Activated CD8-positive, alpha-beta T cell treated with anti-CD3 and anti-CD28 coated beads, Interleukin-2, amount 10 ng/mL, durations not matched to agents 7 days and 5 days (primary cell): ENCODE measurements at regions of chr15 and their contacts with region 1.

Region 1: GRCh38 chr15:52208306-52208946 is 17.2 kb upstream of the GNB5 start:
- DNase-seq: peak; percentile 86
- ATAC-seq: peak; percentile 98
- H3K4me3 Mint-ChIP-seq: no peak overlapping the region
- H3K27ac Mint-ChIP-seq: no peak overlapping the region
- H3K4me1 Mint-ChIP-seq: peaks cover 11% of the 10 kb centered on the region
- H3K27me3 Mint-ChIP-seq: no peaks in the 10 kb centered on the region

Region 2: GRCh38 chr15:52097176-52097575 is 111.2 kb before region 1 on chr15:
- CTCF ChIA-PET with region 1: no interaction called
- POLR2A ChIA-PET with region 1: no interaction called
- DNase-seq: no peak
- ATAC-seq: no peak
- H3K4me3 Mint-ChIP-seq: no peak overlapping the region
- H3K27ac Mint-ChIP-seq: no peak overlapping the region
- H3K4me1 Mint-ChIP-seq: no peaks in the 10 kb centered on the region
- H3K27me3 Mint-ChIP-seq: peaks cover 16% of the 10 kb centered on the region

Region 3: DNA sequence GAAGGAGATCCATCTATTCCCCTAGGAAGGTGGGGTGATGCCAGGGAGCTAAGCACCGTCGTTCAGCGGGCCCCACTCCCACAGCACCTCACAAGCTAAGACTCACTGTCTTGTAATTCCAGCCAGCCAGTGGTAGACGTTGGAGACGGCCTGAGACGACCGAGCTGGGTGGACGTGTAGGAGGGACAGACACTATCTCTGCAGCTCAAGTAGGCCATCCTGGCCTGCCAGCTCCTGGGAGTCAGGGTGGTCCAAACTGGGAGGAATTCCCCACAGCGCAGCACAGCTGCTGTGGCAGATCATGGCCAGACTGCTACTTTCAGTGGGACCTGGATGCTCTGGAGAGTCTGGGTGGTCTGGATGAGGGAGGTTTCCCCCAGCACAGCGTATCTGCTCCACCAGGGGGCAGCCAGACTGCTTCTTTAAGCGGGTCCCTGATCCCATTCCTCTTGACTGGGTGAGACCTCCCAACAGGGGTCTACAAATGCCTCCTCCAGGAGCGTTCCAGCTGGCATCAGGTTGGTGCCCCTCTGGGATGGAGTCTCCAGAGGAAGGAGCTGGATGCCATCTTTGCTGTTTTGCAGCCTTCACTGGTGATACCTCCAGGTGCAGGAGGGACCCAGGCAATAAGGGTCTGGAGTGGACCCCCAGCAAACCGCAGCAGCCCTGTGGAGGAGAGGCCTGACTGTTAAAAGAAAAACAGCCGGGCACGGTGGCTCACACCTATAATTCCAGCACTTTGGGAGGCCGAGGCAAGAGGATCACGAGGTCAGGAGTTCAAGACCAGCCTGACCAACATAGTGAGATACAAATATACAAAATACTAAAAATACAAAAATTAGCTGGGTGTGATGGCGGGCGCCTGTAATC is 44.9 kb before region 1 on chr15:
- CTCF ChIA-PET with region 1: interaction called, 28 read pairs
- POLR2A ChIA-PET with region 1: no interaction called
- DNase-seq: peak; percentile 29
- ATAC-seq: no peak
- H3K4me3 Mint-ChIP-seq: no peak overlapping the region
- H3K27ac Mint-ChIP-seq: no peak overlapping the region
- H3K4me1 Mint-ChIP-seq: peaks cover 15% of the 10 kb centered on the region
- H3K27me3 Mint-ChIP-seq: no peaks in the 10 kb centered on the region

Region 4: DNA sequence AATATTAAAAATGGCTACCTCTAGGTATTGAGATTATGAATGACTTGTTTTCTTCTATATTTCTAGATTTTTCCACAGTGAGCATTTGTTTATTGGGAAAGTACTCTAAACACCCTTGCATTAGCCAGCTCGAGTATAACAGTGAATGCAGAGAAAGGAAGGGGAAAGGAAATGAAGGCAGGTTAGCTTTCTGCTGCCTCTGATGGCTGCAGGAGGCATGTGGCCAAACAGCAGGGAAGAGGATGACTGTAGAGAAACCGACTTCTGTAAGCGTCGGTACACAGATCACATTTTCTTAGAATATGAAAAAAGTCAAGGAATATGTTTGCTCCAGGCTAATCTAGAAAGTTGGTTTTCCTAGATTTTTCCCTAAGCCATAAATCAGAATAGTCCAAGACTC is 37.0 kb before region 1 on chr15:
- CTCF ChIA-PET with region 1: interaction called, 42 read pairs
- POLR2A ChIA-PET with region 1: no interaction called
- DNase-seq: peak; percentile 41
- ATAC-seq: peak; percentile 70
- H3K4me3 Mint-ChIP-seq: no peak overlapping the region
- H3K27ac Mint-ChIP-seq: no peak overlapping the region
- H3K4me1 Mint-ChIP-seq: peaks cover 18% of the 10 kb centered on the region
- H3K27me3 Mint-ChIP-seq: no peaks in the 10 kb centered on the region

Region 5: DNA sequence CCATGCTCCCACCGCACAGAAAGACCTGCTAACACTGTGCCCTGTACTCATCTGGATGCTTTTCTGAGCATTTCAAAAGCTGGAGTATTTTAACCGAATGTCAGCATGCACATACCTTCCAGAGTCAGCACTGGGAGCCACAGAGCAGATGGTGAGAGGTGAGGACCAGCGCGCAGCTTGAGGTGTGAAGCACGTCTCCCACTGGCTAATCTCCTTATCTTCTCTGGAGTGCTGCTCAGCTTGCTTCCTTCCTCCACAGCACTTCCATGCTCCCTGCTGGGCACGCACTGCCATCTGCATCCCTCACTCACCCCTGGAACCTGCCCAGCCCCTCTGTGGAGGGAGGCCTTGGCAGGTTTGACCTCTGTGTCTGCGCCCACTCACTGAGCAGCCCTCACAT is 17.2 kb before region 1 on chr15 and contains the start of gene GNB5:
- CTCF ChIA-PET with region 1: interaction called, 55 read pairs
- POLR2A ChIA-PET with region 1: no interaction called
- DNase-seq: no peak
- ATAC-seq: no peak
- H3K4me3 Mint-ChIP-seq: no peak within 1 kb of the TSS
- H3K27ac Mint-ChIP-seq: no peak within 1 kb of the TSS
- H3K4me1 Mint-ChIP-seq: no peaks in the 10 kb centered on the region
- H3K27me3 Mint-ChIP-seq: no peaks in the 10 kb centered on the region
- total RNA-seq, gene GNB5: 33.8 to 37.0 TPM

Region 6: GRCh38 chr15:52551762-52552161 is 343.3 kb after region 1 on chr15:
- CTCF ChIA-PET with region 1: no interaction called
- POLR2A ChIA-PET with region 1: no interaction called
- DNase-seq: no peak
- ATAC-seq: no peak
- H3K4me3 Mint-ChIP-seq: no peak overlapping the region
- H3K27ac Mint-ChIP-seq: no peak overlapping the region
- H3K4me1 Mint-ChIP-seq: peaks cover 15% of the 10 kb centered on the region
- H3K27me3 Mint-ChIP-seq: no peaks in the 10 kb centered on the region